ENCODE measurements at regions of chr7 and their contacts with region 1.

Region 1: GRCh38 chr7:6589829-6590644 is at the start of gene INTS15:
- DNase-seq: peak; percentile 80
- H3K4me3 Mint-ChIP-seq: peak within 1 kb of the TSS; percentile 93
- H3K27ac Mint-ChIP-seq: peak within 1 kb of the TSS; percentile 93
- H3K4me1 Mint-ChIP-seq: peaks cover 24% of the 10 kb centered on the region
- H3K27me3 Mint-ChIP-seq: no peaks in the 10 kb centered on the region
- total RNA-seq, gene INTS15: 40.4 to 48.3 TPM

Region 2: GRCh38 chr7:6571160-6571779 is 18.8 kb before region 1 on chr7:
- CTCF ChIA-PET with region 1: interaction called, 29 read pairs
- POLR2A ChIA-PET with region 1: no interaction called
- DNase-seq: no peak
- H3K4me3 Mint-ChIP-seq: no peak overlapping the region
- H3K27ac Mint-ChIP-seq: no peak overlapping the region
- H3K4me1 Mint-ChIP-seq: no peaks in the 10 kb centered on the region
- H3K27me3 Mint-ChIP-seq: peaks cover 3% of the 10 kb centered on the region

Region 3: GRCh38 chr7:6577365-6578113 is 12.5 kb before region 1 on chr7 and contains the start of gene ZDHHC4:
- CTCF ChIA-PET with region 1: interaction called, 29 read pairs
- POLR2A ChIA-PET with region 1: no interaction called
- DNase-seq: peak; percentile 88
- H3K4me3 Mint-ChIP-seq: peak within 1 kb of the TSS; percentile 84
- H3K27ac Mint-ChIP-seq: peak within 1 kb of the TSS; percentile 94
- H3K4me1 Mint-ChIP-seq: peaks cover 38% of the 10 kb centered on the region
- H3K27me3 Mint-ChIP-seq: no peaks in the 10 kb centered on the region
- total RNA-seq, gene ZDHHC4: 29.9 to 35.3 TPM

Measured in activated CD4-positive, alpha-beta T cell treated with anti-CD3 and anti-CD28 coated beads, Interleukin-2, amount 10 ng/mL, durations not matched to agents 7 days and 5 days (primary cell).